Heart left ventricle (tissue), 16 donors: ENCODE measurements at regions of chr9 and their contacts with region 1.

Region 1: GRCh38 chr9:34458013-34458958 is at the starts of genes DNAI1 and FAM219A:
- DNase-seq: peak; percentile 99
- ATAC-seq: peak; percentile 97 to 98 (median 98)
- H3K4me3 ChIP-seq: peak within 1 kb of the TSS; percentile 52 to 99 (median 88)
- H3K27ac ChIP-seq: peak within 1 kb of the TSS; percentile 69 to 94 (median 84)
- H3K4me1 ChIP-seq: peaks cover 0 to 51% (median 40%) of the 10 kb centered on the region in 12 donors
- H3K27me3 ChIP-seq: no peaks in the 10 kb centered on the region
- CTCF ChIP-seq: no peak
- POLR2A ChIP-seq: peak; percentile 74 to 97
- total RNA-seq, gene DNAI1: 0.43 to 0.86 TPM in 2 of 9 donors, not detected in the others
- total RNA-seq, gene FAM219A: 12.7 to 36.7 (median 25.9) TPM

Region 2: DNA sequence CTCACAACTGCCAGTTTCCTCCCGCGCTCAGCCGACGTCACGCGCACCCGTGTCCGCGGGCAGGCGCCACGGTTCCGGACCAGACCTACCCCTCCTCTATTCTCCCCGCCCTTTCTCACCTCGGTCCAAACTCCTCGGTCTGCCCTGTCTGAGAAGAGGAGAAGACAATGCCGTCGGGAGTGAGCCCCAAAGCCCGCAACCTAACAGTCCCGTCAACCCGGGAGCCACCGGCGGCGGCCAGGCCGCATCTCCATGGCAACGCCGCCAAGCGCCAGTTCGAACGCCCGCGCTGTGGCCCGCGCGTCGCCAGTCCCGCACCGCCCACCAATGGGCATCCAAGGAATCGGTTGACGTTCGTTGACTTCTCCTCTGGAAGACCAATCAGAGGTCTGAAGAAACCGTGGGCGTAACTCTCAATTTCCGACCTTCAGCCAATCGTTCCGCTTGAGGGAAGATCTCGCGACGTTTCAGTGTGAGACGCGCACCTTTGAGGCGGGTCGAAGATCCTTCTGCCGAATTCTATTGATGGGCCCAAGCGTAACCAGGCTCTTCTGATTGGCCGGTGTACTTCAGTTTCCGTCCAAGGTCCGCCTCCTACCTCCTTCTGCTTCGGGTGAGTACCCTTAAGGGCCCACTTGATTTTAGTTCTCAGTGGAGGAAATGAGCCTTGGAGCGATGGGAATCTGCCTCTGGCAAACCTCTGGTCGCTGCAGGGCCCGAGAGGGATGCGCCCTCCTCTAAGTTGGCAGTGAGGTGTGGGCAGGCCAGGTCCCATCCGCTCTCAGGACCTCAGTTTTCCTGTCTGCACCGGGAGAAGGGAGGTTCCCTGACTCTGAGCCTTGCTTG is 129.1 kb before region 1 on chr9 and contains the starts of genes KIF24 and NUDT2:
- intact Hi-C with region 1: loop called in 1 of 10 experiments (anchors 5 kb)
- DNase-seq: peak; percentile 96 to 99 (median 98)
- ATAC-seq: peak; percentile 97 to 98 (median 98)
- H3K4me3 ChIP-seq: peak within 1 kb of the TSS; percentile 47 to 88 (median 80)
- H3K27ac ChIP-seq: peak within 1 kb of the TSS; percentile 88 to 96 (median 91)
- H3K4me1 ChIP-seq: peaks cover 0 to 35% (median 14%) of the 10 kb centered on the region in 12 donors
- H3K27me3 ChIP-seq: no peaks in the 10 kb centered on the region
- CTCF ChIP-seq: peak in 4 of 12 donors; percentile 7 to 33 (median 10)
- POLR2A ChIP-seq: peak in 1 of 2 donors; percentile 88
- total RNA-seq, gene KIF24: 0.25 to 1.6 (median 0.67) TPM
- total RNA-seq, gene NUDT2: 14.1 to 21.3 (median 17.2) TPM

Region 3: DNA sequence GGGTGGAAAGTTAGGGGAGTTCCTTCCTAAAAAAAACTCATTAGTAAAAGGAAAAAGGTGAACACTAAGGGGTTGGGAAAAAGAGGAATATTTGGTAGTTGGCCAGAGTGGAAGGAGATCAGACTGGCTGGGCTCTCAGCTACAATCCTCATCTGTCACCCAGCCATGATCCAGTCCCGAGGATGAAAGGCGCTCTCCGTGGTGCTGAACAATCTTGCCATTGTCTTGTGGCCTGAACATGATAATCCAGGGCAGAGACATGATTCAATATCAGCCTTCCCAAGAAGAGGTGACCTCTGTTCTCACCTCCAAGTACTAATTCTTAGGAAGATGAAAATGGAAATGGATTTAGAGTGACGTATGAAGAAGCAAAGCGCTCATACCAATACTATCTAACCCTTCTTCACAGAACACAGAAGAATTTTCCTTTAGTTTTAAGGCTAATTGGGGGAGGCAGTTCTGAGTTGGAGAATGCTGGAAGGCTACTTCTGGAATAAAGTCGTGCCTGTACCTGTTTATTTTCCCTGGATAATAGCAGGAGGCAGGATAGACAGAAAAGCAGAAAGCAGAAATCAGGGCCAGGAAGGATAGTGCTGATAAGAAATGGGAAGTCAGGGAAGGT is 44.9 kb before region 1 on chr9:
- intact Hi-C with region 1: loop called in 1 of 10 experiments (anchors 5 kb)
- DNase-seq: peak in 2 of 5 donors; percentile 53 to 57
- ATAC-seq: peak; percentile 53 to 74 (median 60)
- H3K4me3 ChIP-seq: no peak overlapping the region
- H3K27ac ChIP-seq: no peak overlapping the region
- H3K4me1 ChIP-seq: peaks cover 0 to 4% (median 0%) of the 10 kb centered on the region in 12 donors
- H3K27me3 ChIP-seq: no peaks in the 10 kb centered on the region
- CTCF ChIP-seq: no peak
- POLR2A ChIP-seq: no peak

Region 4: DNA sequence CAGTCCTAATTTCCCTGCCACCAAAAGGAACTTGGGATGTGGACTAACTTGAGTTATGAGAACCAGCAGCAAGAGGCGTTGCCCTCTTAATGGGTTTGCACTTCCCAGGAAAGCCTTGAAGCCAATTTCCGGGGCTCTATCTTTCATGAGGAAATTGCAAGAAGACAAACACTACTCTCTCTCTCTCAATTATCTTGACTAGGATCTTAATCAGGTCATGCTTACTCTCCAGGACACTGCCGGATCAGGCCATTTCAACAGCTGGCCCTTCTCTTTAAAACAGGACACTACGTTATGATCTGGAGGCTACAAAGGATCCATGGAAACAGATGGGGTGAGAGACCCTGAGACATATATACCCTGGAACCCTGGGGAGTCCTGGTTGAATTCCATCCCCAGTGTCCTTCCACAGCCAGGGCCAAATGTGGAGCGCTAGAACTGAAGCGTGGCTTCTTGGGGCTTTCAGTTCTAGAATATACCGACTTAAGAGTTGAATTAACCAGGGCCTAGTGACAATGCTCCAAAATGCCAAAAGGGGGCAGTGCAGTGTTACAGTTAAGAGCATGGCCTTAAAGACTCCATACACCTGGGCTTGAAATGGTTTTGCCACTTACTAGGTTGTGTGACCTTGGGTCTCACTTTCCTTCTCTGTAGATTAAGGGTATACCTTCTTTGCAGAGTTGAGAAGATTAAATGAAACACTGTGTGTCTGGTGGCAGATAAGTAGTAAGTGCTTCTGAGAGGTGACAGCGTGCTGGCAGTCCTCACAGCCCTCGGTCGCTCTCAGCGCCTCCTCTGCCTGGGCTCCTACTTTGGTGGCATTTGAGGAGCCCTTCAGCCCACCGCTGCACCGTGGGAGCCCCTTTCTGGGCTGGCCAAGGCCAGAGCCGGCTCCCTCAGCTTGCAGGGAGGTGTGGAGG is 21.0 kb before region 1 on chr9:
- intact Hi-C with region 1: loop called in 2 of 10 experiments (anchors 1 to 2 kb)
- DNase-seq: peak in 4 of 5 donors; percentile 38 to 48 (median 42)
- ATAC-seq: peak; percentile 68 to 89 (median 84)
- H3K4me3 ChIP-seq: no peak overlapping the region
- H3K27ac ChIP-seq: no peak overlapping the region
- H3K4me1 ChIP-seq: peaks cover 3 to 42% (median 28%) of the 10 kb centered on the region in 12 donors
- H3K27me3 ChIP-seq: no peaks in the 10 kb centered on the region
- CTCF ChIP-seq: peak; percentile 66 to 85 (median 79)
- POLR2A ChIP-seq: no peak

Region 5: GRCh38 chr9:34522971-34523797 is 64.9 kb after region 1 on chr9 and contains the start of gene ENHO:
- intact Hi-C with region 1: loop called in 1 of 10 experiments (anchors 5 kb)
- DNase-seq: peak; percentile 84 to 93 (median 90)
- ATAC-seq: peak; percentile 87 to 98 (median 98)
- H3K4me3 ChIP-seq: peak within 1 kb of the TSS in 11 of 12 donors; percentile 25 to 62 (median 52)
- H3K27ac ChIP-seq: peak within 1 kb of the TSS in 3 of 12 donors; percentile 23 to 41 (median 28)
- H3K4me1 ChIP-seq: peaks cover 0 to 15% (median 4%) of the 10 kb centered on the region in 12 donors
- H3K27me3 ChIP-seq: peaks cover 0 to 10% (median 0%) of the 10 kb centered on the region in 9 donors
- CTCF ChIP-seq: peak in 2 of 12 donors; percentile 10 to 11
- POLR2A ChIP-seq: no peak
- total RNA-seq, gene ENHO: 0.37 to 1.2 (median 0.52) TPM in 7 of 9 donors, not detected in the others

Region 6: DNA sequence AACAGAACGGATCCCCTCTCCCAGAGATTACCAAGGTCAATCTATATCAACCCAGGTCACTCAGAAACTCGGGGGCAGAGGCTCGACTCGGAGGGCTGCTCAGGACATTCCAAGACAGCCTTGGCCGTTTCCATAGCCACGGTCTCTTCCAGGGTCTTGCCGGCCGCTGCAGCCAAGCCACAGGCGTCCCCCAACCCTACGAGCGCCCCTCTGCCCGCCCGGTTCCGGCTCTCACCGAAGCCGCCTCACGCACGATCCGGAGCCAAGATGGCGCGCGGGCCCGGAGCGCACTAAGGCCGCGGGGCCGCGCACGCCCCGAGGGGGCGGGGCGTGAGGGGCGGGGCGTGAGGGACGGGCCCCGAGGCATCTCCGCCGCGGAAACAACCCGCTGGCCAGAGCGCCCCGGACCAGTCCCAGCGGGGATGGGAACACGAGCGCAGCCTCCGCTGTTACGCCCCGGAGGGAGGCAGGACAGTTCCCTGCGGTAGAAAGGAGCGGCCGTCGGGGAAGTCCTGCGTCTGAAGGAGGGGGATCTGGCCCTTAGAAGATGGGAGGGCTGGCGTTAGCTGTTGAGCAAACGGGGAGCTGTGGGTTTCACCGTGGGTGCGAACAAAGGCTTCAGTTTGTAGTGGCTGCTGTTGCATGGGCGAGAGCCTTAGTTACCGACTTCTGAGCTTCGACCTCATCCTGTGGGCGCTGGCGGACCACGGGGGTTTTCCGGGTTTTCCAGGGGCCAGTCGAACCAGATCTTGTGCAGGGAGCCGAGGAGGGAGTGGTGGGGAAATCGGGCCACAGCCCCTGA is 153.7 kb after region 1 on chr9 and contains the start of gene RPP25L:
- intact Hi-C with region 1: loop called in 1 of 10 experiments (anchors 10 kb)
- DNase-seq: peak; percentile 90 to 95 (median 92)
- ATAC-seq: peak; percentile 93 to 97 (median 96)
- H3K4me3 ChIP-seq: peak within 1 kb of the TSS; percentile 64 to 95 (median 82)
- H3K27ac ChIP-seq: peak within 1 kb of the TSS; percentile 81 to 97 (median 93)
- H3K4me1 ChIP-seq: peaks cover 0 to 29% (median 24%) of the 10 kb centered on the region in 12 donors
- H3K27me3 ChIP-seq: no peaks in the 10 kb centered on the region
- CTCF ChIP-seq: no peak
- POLR2A ChIP-seq: peak in 1 of 2 donors; percentile 95
- total RNA-seq, gene RPP25L: 22.5 to 79.2 (median 38.3) TPM

Region 7: GRCh38 chr9:35277628-35278359 is 819.5 kb after region 1 on chr9:
- intact Hi-C with region 1: loop called in 1 of 10 experiments (anchors 10 kb)
- DNase-seq: peak in 1 of 5 donors; percentile 8
- ATAC-seq: peak; percentile 72 to 92 (median 88)
- H3K4me3 ChIP-seq: peak overlapping the region in 3 of 12 donors; percentile 1 to 23 (median 14)
- H3K27ac ChIP-seq: peak overlapping the region in 11 of 12 donors; percentile 9 to 81 (median 31)
- H3K4me1 ChIP-seq: peaks cover 0 to 31% (median 12%) of the 10 kb centered on the region in 12 donors
- H3K27me3 ChIP-seq: no peaks in the 10 kb centered on the region
- CTCF ChIP-seq: no peak
- POLR2A ChIP-seq: no peak